ENCODE measurements at regions of chr11 and their contacts with region 1.

Region 1: DNA sequence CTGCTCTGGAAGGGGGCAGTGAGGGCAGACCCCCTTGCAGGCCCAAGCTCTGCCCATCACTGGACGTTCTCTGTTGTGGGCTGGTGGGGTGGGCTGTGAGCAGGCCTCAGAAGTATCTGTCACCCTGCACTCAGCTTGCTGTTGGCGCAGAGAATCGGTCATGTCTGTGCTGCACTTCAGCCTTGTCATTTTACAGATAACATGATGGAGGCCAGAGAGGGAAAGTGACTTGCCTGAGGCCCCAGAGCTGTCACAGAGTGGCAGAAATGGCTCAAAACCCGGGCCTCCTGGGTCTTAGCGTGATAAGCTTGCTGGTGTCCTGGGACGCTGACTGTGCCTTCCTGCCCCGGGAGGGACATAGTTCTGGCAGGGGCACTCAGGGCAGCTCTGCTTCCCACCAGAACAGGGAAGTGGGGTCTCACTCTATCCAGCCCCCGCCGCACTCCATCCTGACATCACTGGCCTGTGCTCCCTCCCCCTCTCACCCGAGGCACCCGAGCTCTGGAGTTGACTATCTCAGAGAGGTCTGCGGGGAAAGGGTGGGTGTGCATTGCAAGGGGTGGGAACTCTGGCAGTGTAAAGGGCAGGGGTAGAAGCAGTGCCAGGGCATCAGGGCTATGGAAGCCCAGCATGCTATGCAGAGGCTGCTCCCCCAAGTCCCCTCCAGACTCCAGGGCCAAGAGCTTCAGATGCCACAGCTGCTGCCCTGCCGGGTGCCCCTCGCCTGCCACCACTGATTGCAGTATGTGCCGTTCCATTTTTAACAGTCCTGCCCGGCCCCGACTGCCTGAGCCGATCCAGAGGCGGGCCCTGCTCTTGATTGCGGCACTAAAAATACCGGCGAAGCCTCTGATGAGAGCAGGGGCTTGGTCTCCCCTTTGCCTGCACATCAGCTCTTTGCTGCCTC is 50.4 kb upstream of the NECTIN1 start:
- DNase-seq: no peak
- H3K4me3 ChIP-seq: no peak overlapping the region
- H3K27ac ChIP-seq: no peak overlapping the region
- H3K4me1 ChIP-seq: no peaks in the 10 kb centered on the region
- H3K27me3 ChIP-seq: no peaks in the 10 kb centered on the region
- CTCF ChIP-seq: no peak

Region 2: DNA sequence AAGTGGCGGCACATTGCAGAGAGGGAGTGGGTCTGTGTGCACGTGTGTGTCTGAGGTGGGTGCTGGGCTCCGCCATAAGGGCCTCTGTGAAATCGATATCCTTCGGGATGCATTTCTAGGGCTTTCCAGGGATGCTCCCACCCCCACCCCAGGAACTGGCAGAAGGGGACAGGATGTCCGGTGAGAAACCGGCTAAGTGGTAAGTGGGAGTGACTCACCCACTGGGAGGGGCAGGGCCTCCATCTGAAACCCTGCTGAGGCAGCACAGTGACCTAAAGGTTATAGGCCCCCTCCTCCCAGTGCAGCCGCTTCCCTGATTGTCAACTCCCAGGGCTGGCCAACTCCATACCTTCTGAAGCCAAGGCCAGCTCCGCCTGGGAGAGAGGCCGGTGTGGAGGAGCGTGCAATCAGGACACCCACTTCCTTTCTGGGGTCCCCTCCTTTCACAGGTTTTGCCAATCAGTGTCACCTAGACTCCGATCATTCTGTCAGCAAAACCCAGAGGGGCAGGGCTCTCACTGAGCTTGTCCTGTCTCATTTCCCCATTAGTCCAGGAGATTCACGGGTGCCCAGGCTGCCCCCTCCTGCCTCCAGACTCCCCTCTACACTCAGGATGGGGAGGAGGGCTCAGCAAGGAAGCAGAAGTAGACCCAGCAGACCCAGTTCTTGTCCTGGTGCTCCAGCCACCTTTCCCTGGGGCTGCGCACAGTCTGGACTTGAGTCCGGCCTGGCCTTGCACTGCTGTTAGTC is 94.9 kb before region 1 on chr11:
- CTCF ChIA-PET with region 1: no interaction called
- dilution Hi-C with region 1: loop called (anchors 5 kb)
- in situ Hi-C with region 1: no loop called
- intact Hi-C with region 1: no loop called
- DNase-seq: peak; percentile 91
- H3K4me3 ChIP-seq: peak overlapping the region in 1 of 3 experiments; percentile 1
- H3K27ac ChIP-seq: peak overlapping the region; percentile 90
- H3K4me1 ChIP-seq: peaks cover 85% of the 10 kb centered on the region
- H3K27me3 ChIP-seq: no peaks in the 10 kb centered on the region
- CTCF ChIP-seq: no peak